Activated naive CD4-positive, alpha-beta T cell treated with anti-CD3 and anti-CD28 coated beads for 36 hours (primary cell): ENCODE measurements at regions of chr15 and their contacts with region 1.

Region 1: GRCh38 chr15:44426975-44427755 is at the start of gene CTDSPL2:
- DNase-seq: peak; percentile 97
- H3K4me3 Mint-ChIP-seq: peak within 1 kb of the TSS; percentile 98
- H3K27ac Mint-ChIP-seq: peak within 1 kb of the TSS; percentile 100
- H3K4me1 Mint-ChIP-seq: peaks cover 41% of the 10 kb centered on the region
- H3K27me3 Mint-ChIP-seq: no peaks in the 10 kb centered on the region
- total RNA-seq, gene CTDSPL2: 61.8 to 63.7 TPM

Region 2: DNA sequence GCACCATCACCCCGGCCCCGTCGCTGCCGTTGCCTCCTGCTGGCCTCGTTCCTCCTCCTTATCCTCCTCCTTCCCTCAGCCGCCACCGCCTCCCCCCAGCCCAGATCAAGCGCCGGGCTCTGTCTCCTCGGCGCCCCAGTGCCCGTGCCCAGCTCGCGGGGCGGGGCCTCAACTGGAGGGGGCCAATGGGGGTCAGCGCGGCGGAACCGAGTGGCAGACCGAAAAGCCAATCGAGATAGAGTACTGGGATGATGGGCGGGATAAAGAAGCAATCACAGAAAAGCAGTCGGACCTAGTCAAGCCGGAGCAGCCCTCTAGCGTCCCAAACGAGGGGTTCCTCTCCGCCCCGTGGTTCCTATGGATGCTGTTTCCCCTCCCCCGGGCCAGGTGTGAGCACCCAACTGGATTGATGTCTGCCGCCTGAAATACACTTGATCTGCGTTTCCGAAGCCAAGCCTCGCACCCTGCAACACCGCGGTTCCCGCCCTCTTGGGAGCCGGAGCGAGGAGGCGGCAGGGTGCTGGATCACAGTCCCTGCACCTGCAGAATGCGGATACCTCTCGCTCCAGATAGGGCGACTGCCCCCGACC is 231.9 kb before region 1 on chr15 and contains the start of gene FRMD5:
- CTCF ChIA-PET with region 1: interaction called, 3 read pairs
- intact Hi-C with region 1: loop called (anchors 1 kb)
- DNase-seq: peak; percentile 94
- H3K4me3 Mint-ChIP-seq: peak within 1 kb of the TSS; percentile 84
- H3K27ac Mint-ChIP-seq: no peak within 1 kb of the TSS
- H3K4me1 Mint-ChIP-seq: peaks cover 18% of the 10 kb centered on the region
- H3K27me3 Mint-ChIP-seq: peaks cover 28% of the 10 kb centered on the region
- total RNA-seq, gene FRMD5: 0.37 to 0.50 TPM

Region 3: DNA sequence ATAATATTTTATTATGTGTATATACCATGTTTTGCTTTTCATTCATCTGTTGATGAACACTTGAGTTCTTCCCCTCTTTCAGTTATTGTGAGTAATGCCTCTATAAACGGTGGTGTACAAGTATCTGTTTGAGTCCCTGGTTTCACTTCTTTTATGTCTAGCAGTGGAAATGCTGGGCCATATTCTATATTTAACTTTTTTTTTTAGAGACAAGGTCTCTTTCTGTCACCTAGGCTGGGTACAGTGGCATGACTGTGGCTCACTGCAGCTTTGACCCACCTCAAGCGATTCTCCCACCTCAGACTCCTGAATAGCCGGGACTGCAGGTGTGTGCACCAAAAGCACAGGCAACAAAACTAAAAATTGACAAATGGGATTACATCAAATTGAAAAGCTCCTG is 118.8 kb before region 1 on chr15:
- CTCF ChIA-PET with region 1: no interaction called
- intact Hi-C with region 1: loop called (anchors 1 kb)
- DNase-seq: peak; percentile 30
- H3K4me3 Mint-ChIP-seq: peak overlapping the region; percentile 43
- H3K27ac Mint-ChIP-seq: peak overlapping the region; percentile 81
- H3K4me1 Mint-ChIP-seq: peaks cover 37% of the 10 kb centered on the region
- H3K27me3 Mint-ChIP-seq: no peaks in the 10 kb centered on the region

Region 4: GRCh38 chr15:44394062-44394461 is 33.1 kb before region 1 on chr15:
- CTCF ChIA-PET with region 1: no interaction called
- intact Hi-C with region 1: no loop called
- DNase-seq: no peak
- H3K4me3 Mint-ChIP-seq: no peak overlapping the region
- H3K27ac Mint-ChIP-seq: no peak overlapping the region
- H3K4me1 Mint-ChIP-seq: peaks cover 10% of the 10 kb centered on the region
- H3K27me3 Mint-ChIP-seq: no peaks in the 10 kb centered on the region

Region 5: GRCh38 chr15:44489464-44489863 is 62.3 kb after region 1 on chr15:
- CTCF ChIA-PET with region 1: interaction called, 5 read pairs
- intact Hi-C with region 1: loop called (anchors 2 kb)
- DNase-seq: no peak
- H3K4me3 Mint-ChIP-seq: no peak overlapping the region
- H3K27ac Mint-ChIP-seq: no peak overlapping the region
- H3K4me1 Mint-ChIP-seq: peaks cover 41% of the 10 kb centered on the region
- H3K27me3 Mint-ChIP-seq: no peaks in the 10 kb centered on the region

Region 6: GRCh38 chr15:44536962-44537734 is 110.0 kb after region 1 on chr15 and contains the start of gene EIF3J:
- CTCF ChIA-PET with region 1: no interaction called
- intact Hi-C with region 1: loop called (anchors 1 kb)
- DNase-seq: peak; percentile 96
- H3K4me3 Mint-ChIP-seq: peak within 1 kb of the TSS; percentile 84
- H3K27ac Mint-ChIP-seq: peak within 1 kb of the TSS; percentile 95
- H3K4me1 Mint-ChIP-seq: peaks cover 48% of the 10 kb centered on the region
- H3K27me3 Mint-ChIP-seq: no peaks in the 10 kb centered on the region
- total RNA-seq, gene EIF3J: 75.8 to 77.9 TPM

Region 7: GRCh38 chr15:44554934-44555723 is 128.0 kb after region 1 on chr15:
- CTCF ChIA-PET with region 1: no interaction called
- intact Hi-C with region 1: no loop called
- DNase-seq: no peak
- H3K4me3 Mint-ChIP-seq: no peak overlapping the region
- H3K27ac Mint-ChIP-seq: peak overlapping the region; percentile 70
- H3K4me1 Mint-ChIP-seq: peaks cover 30% of the 10 kb centered on the region
- H3K27me3 Mint-ChIP-seq: no peaks in the 10 kb centered on the region

Region 8: GRCh38 chr15:44711356-44712107 is 284.4 kb after region 1 on chr15 and contains the start of gene B2M:
- CTCF ChIA-PET with region 1: no interaction called
- intact Hi-C with region 1: no loop called
- DNase-seq: peak; percentile 96
- H3K4me3 Mint-ChIP-seq: peak within 1 kb of the TSS; percentile 99
- H3K27ac Mint-ChIP-seq: peak within 1 kb of the TSS; percentile 100
- H3K4me1 Mint-ChIP-seq: peaks cover 37% of the 10 kb centered on the region
- H3K27me3 Mint-ChIP-seq: peaks cover 3% of the 10 kb centered on the region
- total RNA-seq, gene B2M: 5,387 to 5,703 TPM

Region 9: GRCh38 chr15:44728576-44729407 is 301.6 kb after region 1 on chr15:
- CTCF ChIA-PET with region 1: no interaction called
- intact Hi-C with region 1: loop called (anchors 2 kb)
- DNase-seq: peak; percentile 97
- H3K4me3 Mint-ChIP-seq: peak overlapping the region; percentile 97
- H3K27ac Mint-ChIP-seq: peak overlapping the region; percentile 99
- H3K4me1 Mint-ChIP-seq: peaks cover 69% of the 10 kb centered on the region
- H3K27me3 Mint-ChIP-seq: no peaks in the 10 kb centered on the region

Region 10: GRCh38 chr15:45634442-45635190 is 1207.5 kb after region 1 on chr15 and contains the start of gene SQOR:
- CTCF ChIA-PET with region 1: no interaction called
- intact Hi-C with region 1: loop called (anchors 10 kb)
- DNase-seq: peak; percentile 76
- H3K4me3 Mint-ChIP-seq: peak within 1 kb of the TSS; percentile 99
- H3K27ac Mint-ChIP-seq: peak within 1 kb of the TSS; percentile 86
- H3K4me1 Mint-ChIP-seq: peaks cover 43% of the 10 kb centered on the region
- H3K27me3 Mint-ChIP-seq: no peaks in the 10 kb centered on the region
- total RNA-seq, gene SQOR: 54.3 to 56.4 TPM